ENCODE measurements at regions of chr5 and their contacts with region 1.

Region 1: GRCh38 chr5:147822686-147823491 is 8.6 kb downstream of the SPINK1 start:
- DNase-seq: peak in 4 of 5 donors; percentile 32 to 64 (median 54)
- H3K4me3 ChIP-seq: no peak overlapping the region
- H3K4me3 Mint-ChIP-seq: no peak overlapping the region
- H3K27ac ChIP-seq: no peak overlapping the region
- H3K27ac Mint-ChIP-seq: no peak overlapping the region
- H3K4me1 ChIP-seq: no peaks in the 10 kb centered on the region
- H3K4me1 Mint-ChIP-seq: no peaks in the 10 kb centered on the region
- H3K27me3 ChIP-seq: no peaks in the 10 kb centered on the region
- H3K27me3 Mint-ChIP-seq: peaks cover 0 to 8% of the 10 kb centered on the region in 2 donors

Region 2: DNA sequence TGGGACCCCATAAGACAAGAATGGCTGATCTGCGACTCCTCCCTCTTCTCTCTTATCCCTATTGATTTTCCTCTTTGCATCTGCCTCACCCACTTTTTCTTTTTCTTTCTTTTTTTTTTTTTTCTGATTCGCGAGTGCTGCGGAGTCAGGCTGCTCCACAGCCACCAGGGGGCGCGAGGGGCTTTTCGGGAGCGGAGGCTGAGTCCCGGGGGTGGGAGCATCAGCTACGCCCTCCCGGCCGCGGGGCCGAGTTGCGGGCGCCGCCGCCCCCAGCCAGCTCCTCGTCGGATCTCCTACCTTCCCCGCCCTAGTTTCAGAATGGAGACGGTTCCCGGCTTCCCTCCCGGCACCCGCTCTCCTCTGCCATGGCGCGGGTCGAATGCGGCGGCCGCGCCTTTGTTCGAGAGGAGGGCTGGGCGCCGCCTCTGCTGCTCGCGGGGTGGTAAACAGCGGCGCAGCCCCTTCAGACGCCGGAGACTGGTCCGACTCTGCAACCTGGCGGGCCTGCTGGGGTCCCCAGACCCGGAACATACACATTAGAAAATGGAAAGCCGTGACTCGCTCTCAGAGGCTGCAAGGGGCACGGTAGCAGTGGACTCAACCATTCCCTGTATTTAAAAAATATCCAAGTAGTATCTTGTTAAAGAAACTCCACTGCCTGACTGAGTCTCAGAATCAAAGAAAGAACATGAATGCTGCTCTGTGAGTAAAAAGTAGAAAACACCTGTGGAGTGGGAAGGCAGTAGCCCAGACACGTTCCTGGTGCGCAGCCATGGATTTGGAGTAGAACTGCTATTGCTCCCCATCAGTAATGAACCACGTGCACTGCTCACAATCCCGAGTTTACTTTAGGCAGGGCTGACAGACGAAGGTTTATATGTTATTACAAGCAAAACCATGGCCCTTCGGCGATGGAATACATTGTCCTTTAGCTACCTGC is 368.7 kb before region 1 on chr5:
- CTCF ChIA-PET with region 1: interaction called, 3 read pairs
- POLR2A ChIA-PET with region 1: no interaction called
- intact Hi-C with region 1: loop called (anchors 5 kb)
- DNase-seq: peak in 4 of 5 donors; percentile 42 to 65 (median 54)
- H3K4me3 ChIP-seq: peak overlapping the region; percentile 10 to 35
- H3K4me3 Mint-ChIP-seq: peak overlapping the region; percentile 74 to 89 (median 86)
- H3K27ac ChIP-seq: no peak overlapping the region
- H3K27ac Mint-ChIP-seq: peak overlapping the region in 1 of 7 donors; percentile 28
- H3K4me1 ChIP-seq: peaks cover 13% of the 10 kb centered on the region
- H3K4me1 Mint-ChIP-seq: peaks cover 7 to 18% (median 13%) of the 10 kb centered on the region in 4 donors
- H3K27me3 ChIP-seq: peaks cover 16% of the 10 kb centered on the region
- H3K27me3 Mint-ChIP-seq: peaks cover 44 to 52% of the 10 kb centered on the region in 2 donors

Region 3: GRCh38 chr5:147628058-147628895 is 194.6 kb before region 1 on chr5:
- CTCF ChIA-PET with region 1: interaction called, 48 read pairs
- POLR2A ChIA-PET with region 1: no interaction called
- intact Hi-C with region 1: no loop called
- DNase-seq: peak in 4 of 5 donors; percentile 24 to 64 (median 49)
- H3K4me3 ChIP-seq: no peak overlapping the region
- H3K4me3 Mint-ChIP-seq: peak overlapping the region in 1 of 8 donors; percentile 32
- H3K27ac ChIP-seq: no peak overlapping the region
- H3K27ac Mint-ChIP-seq: peak overlapping the region in 1 of 7 donors; percentile 13
- H3K4me1 ChIP-seq: no peaks in the 10 kb centered on the region
- H3K4me1 Mint-ChIP-seq: peaks cover 0 to 1% (median 0%) of the 10 kb centered on the region in 4 donors
- H3K27me3 ChIP-seq: no peaks in the 10 kb centered on the region
- H3K27me3 Mint-ChIP-seq: no peaks in the 10 kb centered on the region

Region 4: GRCh38 chr5:148205044-148205806 is 382.3 kb after region 1 on chr5:
- CTCF ChIA-PET with region 1: no interaction called
- POLR2A ChIA-PET with region 1: no interaction called
- intact Hi-C with region 1: no loop called
- DNase-seq: no peak
- H3K4me3 ChIP-seq: no peak overlapping the region
- H3K4me3 Mint-ChIP-seq: no peak overlapping the region
- H3K27ac ChIP-seq: no peak overlapping the region
- H3K27ac Mint-ChIP-seq: no peak overlapping the region
- H3K4me1 ChIP-seq: no peaks in the 10 kb centered on the region
- H3K4me1 Mint-ChIP-seq: peaks cover 0 to 4% (median 0%) of the 10 kb centered on the region in 4 donors
- H3K27me3 ChIP-seq: no peaks in the 10 kb centered on the region
- H3K27me3 Mint-ChIP-seq: peaks cover 0 to 3% of the 10 kb centered on the region in 2 donors

Measured in CD4-positive, alpha-beta memory T cell (primary cell).